Heart right ventricle (tissue), 16 donors: ENCODE measurements at regions of chr1 and their contacts with region 1.

Region 1: GRCh38 chr1:201709564-201710295 is 119.2 kb upstream of the IPO9 start:
- DNase-seq: peak; percentile 74 to 84
- ATAC-seq: peak; percentile 56 to 76 (median 63)
- H3K4me3 ChIP-seq: no peak overlapping the region
- H3K27ac ChIP-seq: peak overlapping the region; percentile 5 to 98 (median 90)
- H3K4me1 ChIP-seq: peaks cover 39 to 83% (median 64%) of the 10 kb centered on the region in 9 donors
- H3K27me3 ChIP-seq: no peaks in the 10 kb centered on the region
- CTCF ChIP-seq: peak; percentile 94 to 98 (median 96)

Region 2: GRCh38 chr1:201792534-201793305 is 83.0 kb after region 1 on chr1:
- intact Hi-C with region 1: loop called (anchors 1 to 5 kb)
- DNase-seq: peak; percentile 56 to 86
- ATAC-seq: peak; percentile 79 to 87 (median 80)
- H3K4me3 ChIP-seq: no peak overlapping the region
- H3K27ac ChIP-seq: peak overlapping the region; percentile 53 to 94 (median 82)
- H3K4me1 ChIP-seq: peaks cover 41 to 74% (median 56%) of the 10 kb centered on the region in 9 donors
- H3K27me3 ChIP-seq: no peaks in the 10 kb centered on the region
- CTCF ChIP-seq: peak; percentile 93 to 97 (median 96)

Region 3: DNA sequence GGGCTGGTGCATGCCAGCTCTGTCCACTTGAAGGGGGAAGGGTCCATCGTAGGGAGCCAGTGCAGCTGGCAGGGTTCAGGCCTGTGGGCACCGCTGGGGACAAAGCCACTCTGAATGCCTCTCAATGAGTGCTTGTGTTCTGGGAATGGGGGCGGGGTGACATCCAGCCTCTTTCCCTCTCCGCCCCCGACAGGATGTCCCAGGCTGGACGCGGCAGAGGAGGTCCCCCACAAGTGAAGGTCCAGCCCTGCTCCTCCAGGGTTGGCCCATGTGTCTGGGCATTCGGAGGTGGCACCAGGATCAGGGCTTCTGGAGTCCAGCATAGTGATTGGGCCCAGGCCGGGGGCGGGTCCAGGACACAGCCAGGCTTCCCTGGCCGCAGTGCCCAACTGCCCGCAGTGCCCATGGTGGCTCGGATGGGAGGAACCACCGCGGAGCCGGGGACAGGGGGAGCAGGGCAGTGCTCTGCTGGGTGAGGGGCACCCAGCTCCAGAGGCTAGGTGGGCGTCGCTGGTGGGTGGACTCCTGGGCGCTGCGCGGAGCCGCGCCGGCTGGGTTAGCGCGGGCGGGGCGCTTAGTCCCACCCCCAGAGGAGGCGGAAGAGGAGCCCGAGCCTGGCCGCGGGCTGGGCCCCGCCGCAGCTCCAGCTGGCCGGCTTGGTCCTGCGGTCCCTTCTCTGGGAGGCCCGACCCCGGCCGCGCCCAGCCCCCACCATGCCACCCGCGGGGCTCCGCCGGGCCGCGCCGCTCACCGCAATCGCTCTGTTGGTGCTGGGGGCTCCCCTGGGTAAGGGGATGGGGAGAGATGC is 178.8 kb after region 1 on chr1 and contains the start of gene SHISA4:
- intact Hi-C with region 1: loop called in 1 of 10 experiments (anchors 10 kb)
- DNase-seq: peak; percentile 84
- ATAC-seq: peak; percentile 77 to 88 (median 83)
- H3K4me3 ChIP-seq: peak within 1 kb of the TSS; percentile 51 to 91 (median 78)
- H3K27ac ChIP-seq: peak within 1 kb of the TSS; percentile 8 to 88 (median 83)
- H3K4me1 ChIP-seq: peaks cover 14 to 72% (median 49%) of the 10 kb centered on the region in 9 donors
- H3K27me3 ChIP-seq: peaks cover 0 to 38% (median 0%) of the 10 kb centered on the region in 7 donors
- CTCF ChIP-seq: no peak
- total RNA-seq, gene SHISA4: 104 to 214 (median 130) TPM